Activated CD8-positive, alpha-beta T cell treated with anti-CD3 and anti-CD28 coated beads for 36 hours (primary cell): ENCODE measurements at regions of chr2 and their contacts with region 1.

Region 1: DNA sequence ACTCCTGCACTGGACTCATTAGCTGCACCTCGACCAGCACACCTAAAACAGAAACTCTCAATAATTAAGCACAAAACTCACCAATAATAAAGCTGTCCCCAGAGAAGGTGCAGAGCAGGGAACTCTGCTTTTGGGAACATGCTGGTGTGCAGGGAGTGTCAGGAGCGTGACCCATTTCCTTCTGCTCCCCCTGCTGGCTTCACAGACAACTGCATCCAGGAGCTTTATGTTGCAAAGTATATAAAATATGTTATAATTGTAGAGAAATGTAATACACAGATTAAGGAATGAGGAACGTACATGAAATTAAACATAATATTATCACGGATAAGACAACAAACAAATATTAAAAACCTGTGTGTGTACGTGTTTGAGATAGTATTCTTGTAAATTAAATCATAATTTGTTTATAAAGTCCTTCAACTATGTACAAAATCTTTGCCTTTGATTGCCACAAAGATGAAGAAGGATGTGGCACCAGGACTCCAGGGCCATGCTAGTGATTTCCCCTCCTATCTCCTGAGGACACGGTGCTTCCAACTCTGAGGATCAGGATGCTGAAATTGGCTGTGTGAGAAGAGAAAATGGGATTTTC is 68.6 kb upstream of the MAL start:
- DNase-seq: peak; percentile 59
- ATAC-seq: peak; percentile 64
- H3K4me3 Mint-ChIP-seq: no peak overlapping the region
- H3K27ac Mint-ChIP-seq: no peak overlapping the region
- H3K4me1 Mint-ChIP-seq: no peaks in the 10 kb centered on the region
- H3K27me3 Mint-ChIP-seq: peaks cover 34% of the 10 kb centered on the region
- CTCF ChIP-seq: peak; percentile 95

Region 2: DNA sequence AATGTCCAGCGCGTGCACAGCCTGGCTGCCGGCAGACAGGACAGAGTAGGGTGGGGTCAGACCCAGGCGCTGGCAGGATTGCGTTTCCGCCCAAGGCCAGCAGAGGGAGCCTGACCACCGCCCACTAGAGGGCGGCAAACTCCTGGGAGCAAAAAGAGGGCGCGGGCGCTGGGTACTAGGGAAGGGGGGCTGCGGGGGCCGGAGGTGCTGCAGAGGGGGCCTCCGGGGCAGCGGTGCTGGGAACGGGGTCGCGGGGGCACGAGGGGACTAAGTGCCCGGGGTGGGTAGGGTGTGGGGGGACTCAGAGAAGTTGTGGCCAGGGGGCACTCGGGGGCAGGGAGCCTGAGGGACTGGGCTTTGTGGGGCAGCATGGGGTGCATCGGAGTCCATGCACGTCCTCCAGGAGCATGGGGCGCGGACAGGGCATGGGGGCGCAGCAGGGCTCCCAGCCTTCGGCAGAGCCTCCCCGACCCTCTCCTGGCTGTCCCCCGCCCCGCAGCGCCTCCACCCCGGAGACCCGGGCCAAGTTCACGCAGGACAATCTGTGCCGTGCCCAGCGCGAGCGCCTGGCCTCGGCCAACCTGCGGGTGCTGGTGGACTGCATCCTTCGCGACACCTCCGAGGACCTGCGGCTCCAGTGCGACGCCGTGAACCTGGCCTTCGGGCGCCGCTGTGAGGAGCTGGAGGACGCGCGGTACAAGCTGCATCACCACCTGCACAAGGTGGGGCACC is 82.5 kb before region 1 on chr2:
- CTCF ChIA-PET with region 1: interaction called, 12 read pairs
- POLR2A ChIA-PET with region 1: no interaction called
- intact Hi-C with region 1: loop called (anchors 5 kb)
- DNase-seq: peak; percentile 73
- ATAC-seq: peak; percentile 92
- H3K4me3 Mint-ChIP-seq: no peak overlapping the region
- H3K27ac Mint-ChIP-seq: no peak overlapping the region
- H3K4me1 Mint-ChIP-seq: no peaks in the 10 kb centered on the region
- H3K27me3 Mint-ChIP-seq: peaks cover 3% of the 10 kb centered on the region
- CTCF ChIP-seq: peak; percentile 87

Region 3: GRCh38 chr2:94939349-94939748 is 17.5 kb before region 1 on chr2:
- CTCF ChIA-PET with region 1: interaction called, 20 read pairs
- POLR2A ChIA-PET with region 1: no interaction called
- intact Hi-C with region 1: no loop called
- DNase-seq: no peak
- ATAC-seq: no peak
- H3K4me3 Mint-ChIP-seq: no peak overlapping the region
- H3K27ac Mint-ChIP-seq: no peak overlapping the region
- H3K4me1 Mint-ChIP-seq: no peaks in the 10 kb centered on the region
- H3K27me3 Mint-ChIP-seq: peaks cover 15% of the 10 kb centered on the region
- CTCF ChIP-seq: no peak

Region 4: GRCh38 chr2:94970353-94970752 is 13.5 kb after region 1 on chr2:
- CTCF ChIA-PET with region 1: interaction called, 20 read pairs
- POLR2A ChIA-PET with region 1: no interaction called
- intact Hi-C with region 1: no loop called
- DNase-seq: no peak
- ATAC-seq: no peak
- H3K4me3 Mint-ChIP-seq: no peak overlapping the region
- H3K27ac Mint-ChIP-seq: no peak overlapping the region
- H3K4me1 Mint-ChIP-seq: no peaks in the 10 kb centered on the region
- H3K27me3 Mint-ChIP-seq: peaks cover 35% of the 10 kb centered on the region
- CTCF ChIP-seq: no peak

Region 5: GRCh38 chr2:94986392-94986963 is 29.6 kb after region 1 on chr2:
- CTCF ChIA-PET with region 1: interaction called, 14 read pairs
- POLR2A ChIA-PET with region 1: no interaction called
- intact Hi-C with region 1: no loop called
- DNase-seq: peak; percentile 73
- ATAC-seq: peak; percentile 75
- H3K4me3 Mint-ChIP-seq: no peak overlapping the region
- H3K27ac Mint-ChIP-seq: no peak overlapping the region
- H3K4me1 Mint-ChIP-seq: no peaks in the 10 kb centered on the region
- H3K27me3 Mint-ChIP-seq: peaks cover 9% of the 10 kb centered on the region
- CTCF ChIP-seq: peak; percentile 83

Region 6: DNA sequence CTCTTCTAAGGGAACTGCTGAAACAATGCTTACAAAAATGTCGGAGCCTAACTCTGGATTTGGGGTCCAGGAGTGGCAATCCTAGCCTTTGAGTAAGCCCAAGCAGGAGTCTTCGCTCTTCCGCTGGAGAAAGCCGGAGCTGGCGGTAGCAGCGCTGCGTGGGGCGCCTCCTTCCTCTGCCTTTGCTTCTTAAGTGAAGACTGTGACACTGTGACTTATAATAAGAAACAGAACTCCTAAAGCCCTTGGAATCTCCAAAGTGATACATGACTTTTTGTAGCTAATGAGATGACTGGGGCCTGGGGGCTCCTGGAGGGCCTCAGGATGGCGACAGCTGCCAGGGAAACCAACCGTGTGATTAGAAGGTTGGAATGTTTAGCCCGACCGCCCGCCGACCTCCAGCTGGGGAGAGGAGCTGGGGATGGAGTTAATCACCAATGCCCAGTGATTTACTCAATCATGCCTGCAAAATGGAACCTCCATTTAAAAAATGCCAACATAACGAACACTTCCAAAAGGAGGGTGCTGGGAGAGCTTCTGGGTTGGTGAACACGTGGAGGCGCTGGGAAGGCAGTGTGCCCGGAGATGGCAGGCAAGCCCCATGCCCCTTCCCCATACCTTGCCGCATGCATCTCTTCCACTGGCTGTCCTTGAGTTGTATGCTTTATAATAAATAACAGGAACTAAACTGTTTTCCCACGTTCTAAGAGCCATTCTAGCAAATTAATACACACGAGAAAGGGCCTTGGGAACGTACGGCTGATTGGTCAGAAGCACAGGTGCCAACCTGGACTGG is 39.6 kb after region 1 on chr2:
- CTCF ChIA-PET with region 1: interaction called, 12 read pairs
- POLR2A ChIA-PET with region 1: no interaction called
- intact Hi-C with region 1: no loop called
- DNase-seq: no peak
- ATAC-seq: no peak
- H3K4me3 Mint-ChIP-seq: no peak overlapping the region
- H3K27ac Mint-ChIP-seq: no peak overlapping the region
- H3K4me1 Mint-ChIP-seq: no peaks in the 10 kb centered on the region
- H3K27me3 Mint-ChIP-seq: peaks cover 19% of the 10 kb centered on the region
- CTCF ChIP-seq: no peak

Region 7: DNA sequence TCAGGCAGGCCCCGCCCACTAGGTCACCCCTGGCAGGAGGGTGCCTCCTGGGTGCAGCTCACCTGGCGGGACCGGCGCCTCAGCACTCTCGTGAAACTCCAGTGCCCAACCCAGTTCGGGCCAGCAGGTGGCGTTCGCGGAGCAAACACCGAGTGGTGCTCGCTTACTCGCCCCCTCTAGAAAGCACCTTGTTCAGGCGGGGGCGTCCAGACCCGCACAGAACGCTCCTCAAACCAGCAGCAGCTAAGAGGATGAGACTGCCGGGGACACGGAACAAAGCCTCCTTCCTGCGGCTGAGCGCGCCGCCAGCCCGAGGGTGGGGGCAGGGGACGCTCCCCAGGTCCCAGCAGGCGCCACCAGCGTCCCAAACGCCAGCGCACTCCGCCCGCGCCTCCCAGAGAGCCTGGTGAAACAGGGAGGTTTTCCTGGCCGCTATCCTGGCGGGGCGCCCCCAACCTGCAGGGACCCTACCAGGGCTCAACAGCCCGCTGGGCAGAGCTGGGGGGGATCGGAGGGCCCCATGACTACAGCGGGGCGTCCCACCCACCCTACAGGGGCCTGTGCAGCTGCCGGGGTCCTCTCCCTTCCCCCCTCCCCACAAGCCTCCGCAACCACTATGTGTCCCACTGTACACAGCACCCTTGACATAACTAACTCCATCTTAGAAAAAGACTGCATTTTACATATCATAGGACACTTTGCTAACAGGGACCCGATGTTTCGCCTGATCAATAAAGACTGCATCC is 120.1 kb after region 1 on chr2:
- CTCF ChIA-PET with region 1: no interaction called
- POLR2A ChIA-PET with region 1: no interaction called
- intact Hi-C with region 1: no loop called
- DNase-seq: peak; percentile 98
- ATAC-seq: peak; percentile 75
- H3K4me3 Mint-ChIP-seq: peak overlapping the region; percentile 80
- H3K27ac Mint-ChIP-seq: peak overlapping the region; percentile 93
- H3K4me1 Mint-ChIP-seq: peaks cover 65% of the 10 kb centered on the region
- H3K27me3 Mint-ChIP-seq: no peaks in the 10 kb centered on the region
- CTCF ChIP-seq: peak; percentile 90